CD8-positive, alpha-beta T cell (primary cell): ENCODE measurements at regions of chr20 and their contacts with region 1.

Region 1: GRCh38 chr20:45436732-45437391 is 20.9 kb downstream of the PIGT start:
- DNase-seq: peak; percentile 67 to 94 (median 90)
- ATAC-seq: peak; percentile 99
- H3K4me3 ChIP-seq: peak overlapping the region; percentile 56 to 60
- H3K4me3 Mint-ChIP-seq: peak overlapping the region; percentile 80
- H3K27ac ChIP-seq: peak overlapping the region in 1 of 2 experiments; percentile 53
- H3K27ac Mint-ChIP-seq: peak overlapping the region; percentile 32
- H3K4me1 ChIP-seq: peaks cover 15% of the 10 kb centered on the region
- H3K4me1 Mint-ChIP-seq: peaks cover 16% of the 10 kb centered on the region
- H3K27me3 ChIP-seq: no peaks in the 10 kb centered on the region
- H3K27me3 Mint-ChIP-seq: no peaks in the 10 kb centered on the region
- CTCF ChIP-seq: peak; percentile 84

Region 2: GRCh38 chr20:44909872-44910689 is 526.8 kb before region 1 on chr20 and contains the start of gene PABPC1L:
- CTCF ChIA-PET with region 1: no interaction called
- POLR2A ChIA-PET with region 1: no interaction called
- intact Hi-C with region 1: no loop called
- DNase-seq: peak; percentile 46 to 89 (median 79)
- ATAC-seq: peak; percentile 99
- H3K4me3 ChIP-seq: peak within 1 kb of the TSS; percentile 66 to 78
- H3K4me3 Mint-ChIP-seq: peak within 1 kb of the TSS; percentile 81
- H3K27ac ChIP-seq: peak within 1 kb of the TSS; percentile 19 to 35
- H3K27ac Mint-ChIP-seq: peak within 1 kb of the TSS; percentile 66
- H3K4me1 ChIP-seq: peaks cover 21% of the 10 kb centered on the region
- H3K4me1 Mint-ChIP-seq: peaks cover 30% of the 10 kb centered on the region
- H3K27me3 ChIP-seq: no peaks in the 10 kb centered on the region
- H3K27me3 Mint-ChIP-seq: no peaks in the 10 kb centered on the region
- CTCF ChIP-seq: no peak
- total RNA-seq, gene PABPC1L: 31.9 to 34.0 TPM

Region 3: DNA sequence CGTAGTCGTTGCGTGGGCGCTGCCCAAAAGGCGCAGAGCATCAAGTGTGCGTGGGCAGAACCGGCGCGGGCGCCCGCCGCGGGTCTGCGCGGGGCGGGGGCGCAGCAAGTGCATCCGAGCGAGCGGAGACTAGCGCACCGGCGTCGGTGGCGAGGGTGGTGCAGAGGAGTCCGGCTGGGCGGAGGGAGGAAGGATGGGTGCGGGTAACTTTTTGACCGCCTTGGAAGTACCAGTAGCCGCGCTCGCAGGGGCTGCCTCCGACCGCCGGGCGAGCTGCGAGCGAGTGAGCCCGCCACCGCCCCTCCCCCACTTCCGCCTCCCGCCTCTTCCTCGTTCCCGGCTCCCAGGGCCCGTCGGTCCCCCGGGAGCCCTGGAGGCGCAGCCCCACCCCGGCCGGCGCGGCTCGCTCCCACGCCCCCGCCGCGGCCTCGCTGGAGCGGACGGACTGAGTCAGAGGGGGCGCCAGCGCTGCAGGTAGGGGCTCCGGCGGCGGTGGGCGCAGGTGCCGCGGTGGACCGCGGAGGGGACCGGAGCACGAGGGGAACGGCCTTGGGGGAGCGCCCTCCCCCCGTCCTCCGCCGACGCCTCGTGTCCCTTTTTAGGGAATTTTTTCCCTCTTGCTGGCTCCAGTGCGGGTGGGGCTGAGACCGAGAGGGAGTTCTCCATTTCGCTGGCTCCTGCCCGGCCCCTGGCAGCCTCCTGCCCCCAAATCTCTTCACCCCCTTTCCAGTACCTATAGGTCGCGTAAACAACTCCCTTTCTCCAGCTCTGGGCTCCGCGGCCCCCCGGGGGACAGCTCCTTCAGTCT is 30.4 kb before region 1 on chr20:
- CTCF ChIA-PET with region 1: interaction called, 17 read pairs
- POLR2A ChIA-PET with region 1: interaction called, 4 read pairs
- intact Hi-C with region 1: no loop called
- DNase-seq: peak in 7 of 9 experiments; percentile 31 to 69 (median 46)
- ATAC-seq: peak; percentile 50
- H3K4me3 ChIP-seq: peak overlapping the region; percentile 66 to 73
- H3K4me3 Mint-ChIP-seq: peak overlapping the region; percentile 82
- H3K27ac ChIP-seq: peak overlapping the region; percentile 33 to 73
- H3K27ac Mint-ChIP-seq: peak overlapping the region; percentile 88
- H3K4me1 ChIP-seq: peaks cover 16% of the 10 kb centered on the region
- H3K4me1 Mint-ChIP-seq: peaks cover 23% of the 10 kb centered on the region
- H3K27me3 ChIP-seq: no peaks in the 10 kb centered on the region
- H3K27me3 Mint-ChIP-seq: no peaks in the 10 kb centered on the region
- CTCF ChIP-seq: no peak

Region 4: GRCh38 chr20:45415774-45416637 is 20.9 kb before region 1 on chr20 and contains the start of gene PIGT:
- CTCF ChIA-PET with region 1: interaction called, 17 read pairs
- POLR2A ChIA-PET with region 1: interaction called, 8 read pairs
- intact Hi-C with region 1: loop called (anchors 1 kb)
- DNase-seq: peak; percentile 77 to 98 (median 89)
- ATAC-seq: peak; percentile 96
- H3K4me3 ChIP-seq: peak within 1 kb of the TSS; percentile 87 to 98
- H3K4me3 Mint-ChIP-seq: peak within 1 kb of the TSS; percentile 94
- H3K27ac ChIP-seq: peak within 1 kb of the TSS; percentile 70 to 90
- H3K27ac Mint-ChIP-seq: peak within 1 kb of the TSS; percentile 96
- H3K4me1 ChIP-seq: peaks cover 15% of the 10 kb centered on the region
- H3K4me1 Mint-ChIP-seq: peaks cover 40% of the 10 kb centered on the region
- H3K27me3 ChIP-seq: no peaks in the 10 kb centered on the region
- H3K27me3 Mint-ChIP-seq: no peaks in the 10 kb centered on the region
- CTCF ChIP-seq: no peak
- total RNA-seq, gene PIGT: 213 to 230 TPM

Region 5: GRCh38 chr20:45450097-45450818 is 13.4 kb after region 1 on chr20:
- CTCF ChIA-PET with region 1: interaction called, 28 read pairs
- POLR2A ChIA-PET with region 1: no interaction called
- intact Hi-C with region 1: no loop called
- DNase-seq: peak in 2 of 9 experiments; percentile 56 to 66
- ATAC-seq: peak; percentile 52
- H3K4me3 ChIP-seq: no peak overlapping the region
- H3K4me3 Mint-ChIP-seq: no peak overlapping the region
- H3K27ac ChIP-seq: no peak overlapping the region
- H3K27ac Mint-ChIP-seq: no peak overlapping the region
- H3K4me1 ChIP-seq: no peaks in the 10 kb centered on the region
- H3K4me1 Mint-ChIP-seq: peaks cover under 1% of the 10 kb centered on the region
- H3K27me3 ChIP-seq: no peaks in the 10 kb centered on the region
- H3K27me3 Mint-ChIP-seq: peaks cover 7% of the 10 kb centered on the region
- CTCF ChIP-seq: peak; percentile 64

Region 6: DNA sequence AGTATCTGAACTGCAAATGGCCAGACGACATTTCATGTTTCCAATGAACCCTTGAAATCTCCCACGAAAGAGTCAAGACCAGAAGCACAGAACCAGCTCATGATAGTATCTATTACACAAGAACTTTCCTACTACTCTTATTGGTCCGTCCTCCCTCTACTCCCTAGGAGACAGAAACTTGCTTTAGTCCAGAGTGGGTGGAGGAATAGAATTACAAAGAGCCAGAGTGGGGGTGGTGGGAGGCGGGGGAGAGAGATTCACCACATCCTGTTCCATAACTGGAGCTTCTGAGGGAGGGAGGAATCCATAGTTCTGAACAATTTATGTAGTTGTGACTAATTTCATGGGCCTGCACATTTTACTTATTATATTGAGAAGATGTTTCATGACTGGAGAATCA is 174.2 kb after region 1 on chr20:
- CTCF ChIA-PET with region 1: no interaction called
- POLR2A ChIA-PET with region 1: no interaction called
- intact Hi-C with region 1: no loop called
- DNase-seq: no peak
- ATAC-seq: no peak
- H3K4me3 ChIP-seq: no peak overlapping the region
- H3K4me3 Mint-ChIP-seq: no peak overlapping the region
- H3K27ac ChIP-seq: no peak overlapping the region
- H3K27ac Mint-ChIP-seq: no peak overlapping the region
- H3K4me1 ChIP-seq: no peaks in the 10 kb centered on the region
- H3K4me1 Mint-ChIP-seq: no peaks in the 10 kb centered on the region
- H3K27me3 ChIP-seq: peaks cover 0 to 6% of the 10 kb centered on the region in 2 experiments
- H3K27me3 Mint-ChIP-seq: peaks cover 29% of the 10 kb centered on the region
- CTCF ChIP-seq: no peak

Region 7: DNA sequence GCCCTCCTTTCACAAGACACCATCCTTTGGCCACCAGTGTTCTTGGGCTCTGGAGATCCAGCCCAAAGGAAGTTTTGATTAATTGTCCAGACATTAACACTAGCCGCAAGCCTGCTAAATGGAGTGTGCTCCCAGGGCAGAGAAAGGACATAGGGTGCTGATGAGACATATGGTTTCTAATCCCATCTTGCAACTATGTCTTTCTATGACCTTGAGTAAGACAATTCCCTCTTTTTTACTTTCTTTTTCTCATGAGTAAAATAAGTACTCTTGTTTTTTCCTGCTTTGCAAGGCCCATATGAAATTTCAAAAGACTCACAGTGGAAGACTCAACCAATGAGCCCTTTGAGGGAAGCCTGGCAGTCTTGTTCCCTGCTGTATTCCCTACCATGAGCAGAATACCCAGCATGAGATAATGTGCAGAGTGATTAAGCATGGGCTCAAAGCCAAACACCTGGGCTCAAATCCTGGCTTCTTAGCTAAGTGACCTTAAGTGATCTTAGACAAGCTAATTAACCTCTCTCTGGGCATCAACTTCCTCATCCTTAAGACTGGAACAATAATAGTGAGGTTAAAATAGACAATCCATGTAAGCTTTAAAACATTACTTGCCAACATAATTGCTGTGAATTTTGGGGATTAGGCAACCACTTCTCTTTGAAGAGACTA is 268.2 kb after region 1 on chr20 and contains the start of gene WFDC10B:
- CTCF ChIA-PET with region 1: no interaction called
- POLR2A ChIA-PET with region 1: no interaction called
- intact Hi-C with region 1: no loop called
- DNase-seq: no peak
- ATAC-seq: no peak
- H3K4me3 ChIP-seq: no peak within 1 kb of the TSS
- H3K4me3 Mint-ChIP-seq: no peak within 1 kb of the TSS
- H3K27ac ChIP-seq: no peak within 1 kb of the TSS
- H3K27ac Mint-ChIP-seq: no peak within 1 kb of the TSS
- H3K4me1 ChIP-seq: no peaks in the 10 kb centered on the region
- H3K4me1 Mint-ChIP-seq: no peaks in the 10 kb centered on the region
- H3K27me3 ChIP-seq: no peaks in the 10 kb centered on the region
- H3K27me3 Mint-ChIP-seq: peaks cover 28% of the 10 kb centered on the region
- CTCF ChIP-seq: no peak
- total RNA-seq, gene WFDC10B: not detected